B cell (primary cell): ENCODE measurements at regions of chr2 and their contacts with region 1.

Region 1: DNA sequence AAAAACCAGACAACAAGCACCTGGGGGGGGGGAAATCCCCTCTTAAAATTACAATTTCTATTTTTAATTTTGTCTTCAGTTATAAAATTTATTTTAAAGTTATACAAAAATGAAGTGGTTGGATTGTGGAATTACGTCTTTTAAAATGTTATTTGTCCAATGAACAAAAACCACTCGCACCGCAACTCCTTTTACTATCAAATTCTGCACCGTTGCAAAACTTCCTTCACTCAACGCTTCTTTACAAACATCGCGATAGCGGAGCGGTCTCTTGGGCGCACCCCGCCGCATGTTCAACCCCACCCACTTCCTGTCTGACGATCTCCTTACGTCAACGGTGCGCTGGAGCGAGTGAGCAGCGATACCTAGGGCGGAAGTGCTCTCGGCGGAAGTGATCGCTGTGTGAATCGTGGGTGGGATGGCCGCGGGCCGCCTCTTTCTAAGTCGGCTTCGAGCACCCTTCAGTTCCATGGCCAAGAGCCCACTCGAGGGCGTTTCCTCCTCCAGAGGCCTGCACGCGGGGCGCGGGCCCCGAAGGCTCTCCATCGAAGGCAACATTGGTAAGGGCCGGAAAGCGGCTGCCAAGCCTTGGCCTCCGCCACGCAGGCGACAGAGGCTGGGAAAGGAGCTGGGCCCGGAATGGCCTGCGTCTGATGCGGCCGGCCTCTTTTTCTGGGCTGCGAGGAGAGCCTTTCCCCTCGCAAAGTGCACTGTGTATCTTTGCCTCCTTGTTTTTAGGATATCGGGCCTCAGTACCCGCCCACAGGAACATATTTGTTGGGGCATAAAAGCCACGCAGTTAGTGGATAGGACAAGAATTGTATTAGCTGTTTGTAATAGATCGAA is at the start of gene DGUOK:
- DNase-seq: peak; percentile 99
- ATAC-seq: peak; percentile 98
- H3K4me3 ChIP-seq: peak within 1 kb of the TSS; percentile 69 to 89 (median 76)
- H3K4me3 Mint-ChIP-seq: peak within 1 kb of the TSS; percentile 86
- H3K27ac ChIP-seq: peak within 1 kb of the TSS; percentile 95 to 99
- H3K27ac Mint-ChIP-seq: peak within 1 kb of the TSS; percentile 90
- H3K4me1 ChIP-seq: peaks cover 33 to 37% of the 10 kb centered on the region in 2 donors
- H3K4me1 Mint-ChIP-seq: peaks cover 61% of the 10 kb centered on the region
- H3K27me3 ChIP-seq: no peaks in the 10 kb centered on the region
- H3K27me3 Mint-ChIP-seq: no peaks in the 10 kb centered on the region
- CTCF ChIP-seq: no peak
- total RNA-seq, gene DGUOK: 61.7 and 65.4 TPM in 2 replicates

Region 2: GRCh38 chr2:73736855-73737779 is 189.6 kb before region 1 on chr2 and contains the start of gene TPRKB:
- CTCF ChIA-PET with region 1: no interaction called
- POLR2A ChIA-PET with region 1: no interaction called
- intact Hi-C with region 1: loop called (anchors 5 kb)
- DNase-seq: peak; percentile 95
- ATAC-seq: peak; percentile 99
- H3K4me3 ChIP-seq: peak within 1 kb of the TSS; percentile 68 to 97 (median 88)
- H3K4me3 Mint-ChIP-seq: peak within 1 kb of the TSS; percentile 91
- H3K27ac ChIP-seq: peak within 1 kb of the TSS; percentile 59 to 78
- H3K27ac Mint-ChIP-seq: peak within 1 kb of the TSS; percentile 83
- H3K4me1 ChIP-seq: peaks cover 8 to 15% of the 10 kb centered on the region in 2 donors
- H3K4me1 Mint-ChIP-seq: peaks cover 16% of the 10 kb centered on the region
- H3K27me3 ChIP-seq: no peaks in the 10 kb centered on the region
- H3K27me3 Mint-ChIP-seq: no peaks in the 10 kb centered on the region
- CTCF ChIP-seq: no peak
- total RNA-seq, gene TPRKB: 24.3 and 31.2 TPM in 2 replicates

Region 3: DNA sequence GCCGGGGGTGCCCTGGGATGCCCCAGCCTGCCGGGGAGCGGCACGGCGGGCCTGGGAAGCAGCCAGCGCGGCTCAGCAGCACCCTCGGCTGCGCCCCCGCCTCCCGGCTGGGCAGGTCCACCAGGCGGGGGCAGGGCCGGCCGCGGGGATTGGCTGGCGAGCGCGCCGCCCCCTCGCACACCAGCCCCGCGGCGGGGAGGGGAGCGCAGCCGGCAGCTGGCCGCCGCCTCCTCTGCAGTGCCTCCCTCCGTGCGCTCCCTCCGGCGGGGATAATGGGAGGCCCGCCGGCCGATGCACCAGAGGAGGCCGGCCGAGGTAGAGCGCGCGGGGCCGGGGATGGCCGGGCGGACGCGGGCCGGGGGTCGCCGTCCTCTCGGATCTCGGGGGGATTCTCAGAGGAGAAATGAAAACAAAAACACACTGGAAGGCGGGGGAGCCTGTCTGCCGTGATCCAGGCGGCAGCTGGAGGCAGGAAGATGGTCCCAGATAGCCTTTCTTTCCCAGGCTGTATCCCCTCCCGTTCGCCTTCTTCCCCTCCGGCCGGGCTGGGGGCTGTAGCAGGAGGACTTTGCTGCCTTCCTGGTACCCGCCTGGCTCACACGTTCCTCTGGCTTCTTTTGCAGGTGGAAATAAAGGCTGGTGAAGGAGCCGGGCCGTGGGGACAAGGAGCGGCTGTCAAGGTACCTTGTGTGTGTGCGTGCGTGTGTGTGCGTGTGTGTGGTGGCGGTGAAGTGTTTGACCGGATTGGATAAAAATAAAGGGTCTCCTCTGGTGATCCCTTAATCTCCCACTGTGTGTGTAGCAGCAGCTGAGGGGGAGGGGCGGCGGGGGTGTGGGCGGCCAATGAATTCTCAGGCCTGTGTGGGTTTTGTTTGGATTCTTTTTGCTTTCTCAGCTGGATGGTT is 76.0 kb after region 1 on chr2:
- CTCF ChIA-PET with region 1: interaction called, 4 read pairs
- POLR2A ChIA-PET with region 1: interaction called, 3 read pairs
- intact Hi-C with region 1: loop called (anchors 1 kb)
- DNase-seq: peak; percentile 86
- ATAC-seq: peak; percentile 98
- H3K4me3 ChIP-seq: peak overlapping the region in 4 of 5 experiments; percentile 35 to 60 (median 52)
- H3K4me3 Mint-ChIP-seq: peak overlapping the region; percentile 87
- H3K27ac ChIP-seq: no peak overlapping the region
- H3K27ac Mint-ChIP-seq: peak overlapping the region; percentile 53
- H3K4me1 ChIP-seq: peaks cover 15 to 29% of the 10 kb centered on the region in 2 donors
- H3K4me1 Mint-ChIP-seq: peaks cover 66% of the 10 kb centered on the region
- H3K27me3 ChIP-seq: no peaks in the 10 kb centered on the region
- H3K27me3 Mint-ChIP-seq: no peaks in the 10 kb centered on the region
- CTCF ChIP-seq: no peak

Region 4: DNA sequence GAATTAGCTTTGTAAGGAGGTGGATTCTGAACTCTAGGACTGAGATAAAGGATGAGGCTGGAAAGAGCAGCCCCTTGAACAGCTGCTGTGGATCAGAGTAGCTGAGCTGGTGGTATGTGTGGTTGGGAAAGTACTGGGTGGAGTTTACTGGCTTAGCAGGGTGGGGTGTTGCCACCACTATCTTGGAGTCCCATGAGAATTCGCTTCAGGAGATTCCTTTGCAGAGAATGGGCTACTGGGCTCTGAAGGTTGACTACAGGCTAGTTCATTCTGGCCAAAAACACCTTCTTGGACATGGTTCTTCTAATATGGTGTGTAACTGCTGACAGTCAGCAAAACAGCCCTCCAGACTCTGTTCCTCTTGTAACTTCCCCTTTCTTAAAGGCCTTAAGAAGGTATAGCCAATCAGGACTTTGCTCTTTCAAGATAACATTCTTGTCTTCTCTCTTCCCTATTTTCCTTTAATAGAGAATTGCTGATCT is 110.7 kb after region 1 on chr2:
- CTCF ChIA-PET with region 1: interaction called, 3 read pairs
- POLR2A ChIA-PET with region 1: no interaction called
- intact Hi-C with region 1: loop called (anchors 2 kb)
- DNase-seq: peak; percentile 82
- ATAC-seq: peak; percentile 83
- H3K4me3 ChIP-seq: peak overlapping the region in 2 of 5 experiments; percentile 8 to 34
- H3K4me3 Mint-ChIP-seq: peak overlapping the region; percentile 82
- H3K27ac ChIP-seq: peak overlapping the region; percentile 73
- H3K27ac Mint-ChIP-seq: peak overlapping the region; percentile 88
- H3K4me1 ChIP-seq: peaks cover 72 to 73% of the 10 kb centered on the region in 2 donors
- H3K4me1 Mint-ChIP-seq: peaks cover 83% of the 10 kb centered on the region
- H3K27me3 ChIP-seq: no peaks in the 10 kb centered on the region
- H3K27me3 Mint-ChIP-seq: no peaks in the 10 kb centered on the region
- CTCF ChIP-seq: no peak

Region 5: DNA sequence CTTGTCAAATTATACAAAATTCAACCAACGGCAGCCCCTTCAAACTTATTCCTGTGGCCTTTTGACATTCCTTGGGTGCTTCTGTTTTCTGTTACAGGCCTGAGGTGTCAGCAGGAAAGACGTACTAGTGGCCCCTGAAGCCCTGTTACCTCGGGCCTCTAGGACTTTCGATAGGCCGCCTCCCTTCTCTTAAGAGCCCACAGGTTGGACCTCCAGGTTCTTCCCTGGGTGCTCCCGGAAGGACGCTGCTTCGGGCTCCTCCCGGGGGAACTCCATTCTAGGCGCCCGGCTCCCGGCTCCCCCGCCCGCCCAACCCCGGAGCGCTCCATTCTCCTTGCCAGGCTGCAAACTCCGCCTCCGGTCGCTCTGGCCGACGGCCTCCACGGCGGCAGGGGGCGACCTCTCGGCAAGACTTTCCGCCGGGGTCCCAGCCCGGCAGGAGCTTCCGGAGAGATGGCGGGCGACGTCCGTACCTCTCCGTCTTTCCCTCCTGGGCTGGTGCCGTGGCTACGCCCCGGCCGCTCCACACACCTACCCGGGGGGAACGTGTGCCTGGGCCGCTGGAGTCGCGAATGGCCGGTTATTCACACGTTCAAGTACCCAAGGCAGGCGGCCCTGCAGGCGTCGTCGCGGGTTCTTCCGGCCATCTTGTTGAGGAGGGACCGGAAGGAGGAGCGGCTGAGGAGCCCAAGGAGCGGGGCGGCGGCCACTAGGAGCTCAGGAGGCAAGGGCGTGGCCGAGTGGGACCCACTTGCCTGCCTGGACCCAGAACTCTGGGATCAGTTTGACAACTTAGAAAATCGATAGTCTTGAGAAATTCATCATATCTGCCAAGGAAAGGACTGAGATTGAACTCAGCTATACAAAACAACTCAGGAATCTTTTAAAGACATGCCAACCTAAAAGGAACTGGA is 193.5 kb after region 1 on chr2:
- CTCF ChIA-PET with region 1: no interaction called
- POLR2A ChIA-PET with region 1: interaction called, 3 read pairs
- intact Hi-C with region 1: loop called (anchors 1 kb)
- DNase-seq: peak; percentile 91
- ATAC-seq: peak; percentile 96
- H3K4me3 ChIP-seq: peak overlapping the region; percentile 55 to 93 (median 88)
- H3K4me3 Mint-ChIP-seq: peak overlapping the region; percentile 91
- H3K27ac ChIP-seq: peak overlapping the region; percentile 85 to 88
- H3K27ac Mint-ChIP-seq: peak overlapping the region; percentile 94
- H3K4me1 ChIP-seq: peaks cover 0 to 11% of the 10 kb centered on the region in 2 donors
- H3K4me1 Mint-ChIP-seq: peaks cover 8% of the 10 kb centered on the region
- H3K27me3 ChIP-seq: peaks cover 0 to 2% (median 0%) of the 10 kb centered on the region in 4 experiments
- H3K27me3 Mint-ChIP-seq: peaks cover 2% of the 10 kb centered on the region
- CTCF ChIP-seq: peak; percentile 69

Region 6: GRCh38 chr2:74919827-74920226 is 993.1 kb after region 1 on chr2:
- CTCF ChIA-PET with region 1: no interaction called
- POLR2A ChIA-PET with region 1: no interaction called
- intact Hi-C with region 1: no loop called
- DNase-seq: peak; percentile 79
- ATAC-seq: peak; percentile 88
- H3K4me3 ChIP-seq: peak overlapping the region in 1 of 5 experiments; percentile 21
- H3K4me3 Mint-ChIP-seq: peak overlapping the region; percentile 68
- H3K27ac ChIP-seq: no peak overlapping the region
- H3K27ac Mint-ChIP-seq: peak overlapping the region; percentile 15
- H3K4me1 ChIP-seq: peaks cover 3 to 7% of the 10 kb centered on the region in 2 donors
- H3K4me1 Mint-ChIP-seq: peaks cover 27% of the 10 kb centered on the region
- H3K27me3 ChIP-seq: peaks cover 0 to 6% (median 0%) of the 10 kb centered on the region in 4 experiments
- H3K27me3 Mint-ChIP-seq: peaks cover 18% of the 10 kb centered on the region
- CTCF ChIP-seq: peak; percentile 96